A549 (cell line): ENCODE measurements at regions of chr12 and their contacts with region 1.

Region 1: GRCh38 chr12:104456417-104456949 is at the start of gene CHST11:
- DNase-seq: peak; percentile 86 to 95
- ATAC-seq: peak; percentile 80 to 83
- H3K4me3 ChIP-seq: peak within 1 kb of the TSS; percentile 87
- H3K27ac ChIP-seq: peak within 1 kb of the TSS; percentile 91 to 96
- H3K4me1 ChIP-seq: peaks cover 33% of the 10 kb centered on the region
- CTCF ChIP-seq: no peak
- EP300 ChIP-seq: 0 out of 5 replicates have a peak, but pooled peaks of 1 of the 2 experiments have one; percentile 15
- POLR2A ChIP-seq: no peak
- RAD21 ChIP-seq: peak in 1 of 2 experiments; percentile 28; a peak in 1 of 5 replicates
- polyA plus RNA-seq, gene CHST11: 21.8 and 24.0 TPM in 2 replicates

Region 2: DNA sequence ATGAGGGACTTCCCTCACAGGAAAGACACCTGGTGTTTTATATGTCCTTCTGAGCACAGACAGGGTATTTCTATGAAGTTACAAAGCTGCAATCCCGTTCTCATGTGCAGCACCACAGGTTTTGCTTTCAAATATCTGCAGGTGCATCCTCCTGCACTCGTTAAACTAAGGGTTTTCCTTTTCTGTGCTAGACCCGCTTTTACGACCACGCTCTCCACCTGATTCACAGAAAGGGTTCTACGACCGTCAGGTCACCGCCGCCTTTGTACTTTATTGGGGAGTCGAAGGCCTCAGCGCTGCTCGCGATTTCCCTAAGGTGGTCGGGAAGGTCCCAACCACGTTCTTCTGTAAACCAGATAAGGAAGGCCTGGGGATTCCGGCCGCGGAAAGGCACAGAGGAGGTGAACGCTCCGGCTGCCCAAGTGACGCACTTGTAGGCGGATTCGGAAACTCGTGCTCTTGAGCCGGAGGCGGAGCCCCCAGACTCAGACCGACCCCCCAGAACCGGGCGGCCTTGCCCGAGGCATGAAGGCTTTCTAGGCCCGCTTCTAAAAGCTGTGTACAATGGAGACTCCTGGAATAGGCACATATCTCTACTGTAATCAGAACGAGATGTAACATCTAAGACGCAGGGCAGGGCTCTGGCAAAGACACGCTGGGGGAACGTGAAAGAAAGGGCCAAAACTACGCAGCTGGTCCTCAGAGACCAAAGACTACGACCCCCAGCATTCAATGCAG is 527.3 kb before region 1 on chr12:
- CTCF ChIA-PET with region 1: no interaction called
- POLR2A ChIA-PET with region 1: no interaction called
- DNase-seq: peak; percentile 92 to 94
- ATAC-seq: peak; percentile 78 to 82
- H3K4me3 ChIP-seq: peak overlapping the region; percentile 55
- H3K27ac ChIP-seq: peak overlapping the region; percentile 90 to 91
- H3K4me1 ChIP-seq: peaks cover 32% of the 10 kb centered on the region
- CTCF ChIP-seq: no peak
- EP300 ChIP-seq: no peak
- POLR2A ChIP-seq: peak; percentile 72
- RAD21 ChIP-seq: no peak

Region 3: GRCh38 chr12:104467346-104467837 is 10.9 kb after region 1 on chr12:
- CTCF ChIA-PET with region 1: interaction called, 13 read pairs
- POLR2A ChIA-PET with region 1: interaction called, 3 read pairs
- DNase-seq: no peak
- ATAC-seq: no peak
- H3K4me3 ChIP-seq: no peak overlapping the region
- H3K27ac ChIP-seq: no peak overlapping the region
- H3K4me1 ChIP-seq: peaks cover 13% of the 10 kb centered on the region
- CTCF ChIP-seq: no peak
- EP300 ChIP-seq: no peak
- POLR2A ChIP-seq: no peak
- RAD21 ChIP-seq: no peak

Region 4: DNA sequence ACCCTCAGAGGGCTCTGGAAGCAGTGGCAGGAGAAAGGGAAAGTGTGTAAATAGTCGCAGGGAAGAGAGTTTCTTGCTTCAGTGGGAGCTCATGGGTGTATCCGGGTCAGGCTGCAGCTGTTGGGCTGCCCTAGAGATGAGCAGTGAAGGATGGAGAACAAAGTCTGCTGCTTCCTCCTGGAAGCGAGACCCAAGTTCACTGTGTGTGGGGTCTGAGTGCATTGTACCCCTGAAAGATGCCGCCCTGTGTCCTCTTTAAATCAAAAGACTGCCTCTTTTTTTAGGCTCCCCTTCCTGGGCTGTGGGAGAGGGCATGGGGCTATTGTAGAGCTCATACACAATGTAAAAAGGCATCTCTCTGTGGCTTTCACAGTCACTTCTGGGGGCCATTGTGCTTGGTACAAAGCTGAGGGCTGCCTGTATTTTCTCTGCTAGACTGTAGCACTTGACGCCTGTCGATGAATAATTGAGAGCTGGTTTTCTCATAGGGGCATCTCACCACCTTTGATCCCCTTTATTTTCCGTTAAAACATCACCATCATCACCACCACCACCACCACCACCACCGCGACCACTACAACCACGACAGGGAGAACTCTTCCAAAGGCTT is 17.0 kb after region 1 on chr12:
- CTCF ChIA-PET with region 1: interaction called, 13 read pairs
- POLR2A ChIA-PET with region 1: no interaction called
- DNase-seq: no peak
- ATAC-seq: peak; percentile 8 to 46; a peak in 2 of 6 replicates
- H3K4me3 ChIP-seq: no peak overlapping the region
- H3K27ac ChIP-seq: no peak overlapping the region
- H3K4me1 ChIP-seq: no peaks in the 10 kb centered on the region
- CTCF ChIP-seq: no peak
- EP300 ChIP-seq: no peak
- POLR2A ChIP-seq: no peak
- RAD21 ChIP-seq: no peak

Region 5: DNA sequence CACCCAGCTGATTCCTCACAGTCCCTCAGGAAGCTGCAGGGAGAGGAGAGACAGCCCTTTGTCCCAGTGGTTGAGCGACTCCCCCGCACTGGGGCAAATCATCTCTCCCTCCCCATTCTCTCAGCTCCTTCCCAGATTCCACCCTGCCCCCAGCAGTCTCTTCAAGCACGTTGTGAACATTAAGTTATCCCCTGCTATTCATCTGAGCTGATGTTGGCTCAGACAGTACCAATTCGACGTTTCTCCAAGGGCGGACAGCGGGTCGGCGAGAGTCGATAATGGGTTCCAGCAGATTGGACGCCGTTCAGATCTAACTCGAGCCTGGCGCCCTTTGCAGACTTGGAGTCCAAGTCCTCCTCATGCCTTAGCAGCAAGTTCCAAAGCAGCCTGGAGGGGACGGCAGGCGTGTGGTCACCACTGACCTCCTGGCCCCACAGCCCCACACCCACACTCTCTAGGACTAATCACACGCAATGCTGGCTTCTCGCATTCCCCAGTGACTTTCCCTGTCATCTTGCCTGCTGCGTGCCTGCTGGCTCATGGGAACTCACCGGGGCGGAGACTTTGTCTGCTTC is 246.2 kb after region 1 on chr12:
- CTCF ChIA-PET with region 1: interaction called, 11 read pairs
- POLR2A ChIA-PET with region 1: no interaction called
- DNase-seq: no peak
- ATAC-seq: no peak
- H3K4me3 ChIP-seq: no peak overlapping the region
- H3K27ac ChIP-seq: no peak overlapping the region
- H3K4me1 ChIP-seq: peaks cover 13% of the 10 kb centered on the region; the same call in 1 of the 3 replicates
- CTCF ChIP-seq: no peak
- EP300 ChIP-seq: no peak
- POLR2A ChIP-seq: no peak
- RAD21 ChIP-seq: no peak